ENCODE measurements at regions of chr5 and their contacts with region 1.

Region 1: DNA sequence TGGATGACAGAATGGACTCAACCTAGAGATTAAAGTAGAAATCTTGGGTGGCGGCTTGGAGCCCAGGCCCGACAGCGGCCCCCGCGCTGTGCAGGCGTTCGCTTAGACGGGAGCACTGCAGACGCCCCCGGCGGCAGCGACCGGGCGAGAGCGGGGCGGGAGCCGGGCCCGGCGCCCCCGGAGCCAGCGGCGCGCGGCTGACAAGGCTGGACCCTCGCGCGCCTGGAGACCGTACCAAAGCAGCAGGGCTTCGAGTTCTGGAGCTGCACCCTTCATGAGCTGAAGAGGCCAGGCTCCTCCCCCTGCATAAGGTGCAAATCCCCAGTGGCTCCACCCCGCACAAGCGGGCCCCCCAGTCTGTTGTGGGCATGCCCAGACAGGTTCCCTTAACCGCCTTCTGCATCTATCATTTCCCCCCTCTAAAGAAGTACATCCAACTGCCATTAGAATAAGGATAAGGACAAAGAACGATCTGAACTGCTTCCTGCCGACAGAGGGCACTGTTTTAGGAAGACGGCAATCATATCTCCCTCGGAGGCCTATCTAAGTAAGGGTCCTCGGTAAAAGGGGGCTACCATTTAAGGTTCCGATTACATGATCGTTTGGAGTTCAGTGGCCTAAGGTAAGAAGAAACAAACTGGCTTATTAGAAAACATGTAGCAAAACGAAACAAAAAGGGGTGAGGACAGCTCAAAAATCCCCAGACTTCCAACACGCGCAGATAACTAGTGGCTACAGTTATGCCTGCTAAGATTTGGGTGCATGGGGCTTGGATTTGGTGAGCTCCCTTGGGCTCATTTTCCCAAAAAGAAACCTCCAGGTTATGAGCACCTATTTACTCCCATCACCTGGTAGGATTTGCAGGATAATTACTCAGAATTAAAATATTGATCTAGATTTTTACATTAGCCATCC is 66.3 kb downstream of the RGMB start:
- DNase-seq: peak; percentile 9
- H3K4me3 ChIP-seq: no peak overlapping the region
- H3K27ac ChIP-seq: no peak overlapping the region
- H3K4me1 ChIP-seq: no peaks in the 10 kb centered on the region
- CTCF ChIP-seq: peak; percentile 60; the same call in 1 of the 2 replicates

Region 2: GRCh38 chr5:98709681-98710080 is 130.0 kb before region 1 on chr5:
- CTCF ChIA-PET with region 1: no interaction called
- POLR2A ChIA-PET with region 1: interaction called, 11 read pairs
- intact Hi-C with region 1: no loop called
- DNase-seq: no peak
- H3K4me3 ChIP-seq: no peak overlapping the region
- H3K27ac ChIP-seq: no peak overlapping the region
- H3K4me1 ChIP-seq: no peaks in the 10 kb centered on the region
- CTCF ChIP-seq: no peak

Measured in OCI-LY7 (cell line).